PC-9 (cell line): ENCODE measurements at regions of chr4 and their contacts with region 1.

Region 1: GRCh38 chr4:122716825-122717448 is 15.6 kb upstream of the BBS12 start:
- DNase-seq: peak in 1 of 2 experiments; percentile 54
- H3K4me3 ChIP-seq: no peak overlapping the region
- H3K27ac ChIP-seq: no peak overlapping the region
- H3K4me1 ChIP-seq: no peaks in the 10 kb centered on the region
- H3K27me3 ChIP-seq: no peaks in the 10 kb centered on the region
- CTCF ChIP-seq: peak; percentile 90

Region 2: DNA sequence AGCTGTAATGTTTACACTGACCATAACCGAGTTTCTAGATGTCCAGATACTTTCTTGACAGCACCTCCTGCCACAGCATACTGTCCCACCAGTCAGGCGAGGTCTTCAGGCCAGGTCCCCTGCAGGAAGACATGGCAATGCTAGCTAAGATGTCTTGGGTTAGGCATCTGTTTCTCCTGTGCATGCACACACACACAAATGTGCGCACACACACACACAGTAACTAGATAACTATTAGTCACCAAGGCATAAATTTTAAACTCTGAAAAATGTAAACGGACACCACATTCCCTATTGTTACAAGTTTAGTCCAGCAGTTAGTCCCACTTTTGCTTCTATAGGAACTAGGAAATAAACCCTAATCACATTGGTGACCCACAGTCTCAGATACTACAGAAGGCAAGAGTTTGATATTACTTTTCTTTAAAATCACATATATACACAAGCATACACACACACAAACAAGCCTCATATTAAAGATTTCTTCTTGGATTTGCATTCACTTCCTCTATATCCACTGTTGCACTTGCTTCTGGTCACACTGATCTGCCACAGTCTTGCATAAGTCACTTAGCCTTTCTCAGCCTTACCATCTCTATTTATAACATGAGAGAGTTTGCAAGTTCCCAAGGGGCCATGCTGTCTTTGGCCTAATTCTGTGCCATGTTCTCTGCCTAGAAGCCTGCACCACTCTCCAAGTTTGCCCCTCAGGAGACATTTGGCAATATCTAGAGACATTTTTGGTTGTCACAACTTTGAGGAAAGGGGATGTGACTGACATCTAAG is 128.3 kb before region 1 on chr4:
- CTCF ChIA-PET with region 1: no interaction called
- POLR2A ChIA-PET with region 1: no interaction called
- intact Hi-C with region 1: no loop called
- DNase-seq: no peak
- H3K4me3 ChIP-seq: no peak overlapping the region
- H3K27ac ChIP-seq: no peak overlapping the region
- H3K4me1 ChIP-seq: no peaks in the 10 kb centered on the region
- H3K27me3 ChIP-seq: no peaks in the 10 kb centered on the region
- CTCF ChIP-seq: no peak

Region 3: GRCh38 chr4:122602277-122603142 is 114.4 kb before region 1 on chr4:
- CTCF ChIA-PET with region 1: interaction called, 16 read pairs
- POLR2A ChIA-PET with region 1: no interaction called
- intact Hi-C with region 1: loop called (anchors 2 kb)
- DNase-seq: peak in 1 of 2 experiments; percentile 6
- H3K4me3 ChIP-seq: no peak overlapping the region
- H3K27ac ChIP-seq: no peak overlapping the region
- H3K4me1 ChIP-seq: no peaks in the 10 kb centered on the region
- H3K27me3 ChIP-seq: 0 out of 2 replicates have a peak, but pooled peaks cover 6% of the 10 kb centered on the region
- CTCF ChIP-seq: peak; percentile 64

Region 4: DNA sequence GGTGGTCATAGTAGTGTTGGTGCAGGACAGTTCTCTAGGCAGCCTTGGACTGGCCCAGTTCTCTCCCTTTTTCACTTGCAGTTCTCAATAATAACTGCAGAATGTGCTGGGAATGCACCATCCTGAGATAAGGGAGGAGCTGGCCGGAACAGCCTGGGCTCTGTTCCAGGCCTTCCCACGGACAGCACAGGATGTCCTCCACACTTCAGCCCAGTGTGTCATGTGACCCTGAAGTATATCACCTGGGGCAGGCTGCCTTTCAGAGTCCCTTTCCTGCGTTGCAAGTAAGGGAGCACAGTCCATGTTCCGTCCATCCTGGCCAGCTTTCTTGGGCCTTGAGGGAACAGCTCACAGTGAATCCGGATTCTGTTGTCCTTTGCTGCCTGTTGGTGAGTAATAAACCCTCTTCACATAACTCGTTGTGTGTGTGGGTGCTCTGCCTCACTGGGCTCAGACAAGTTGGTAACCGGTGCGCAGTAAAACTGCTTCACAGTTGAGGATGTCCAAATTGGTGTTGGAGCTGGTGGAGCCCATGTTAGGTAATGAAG is 16.7 kb before region 1 on chr4:
- CTCF ChIA-PET with region 1: no interaction called
- POLR2A ChIA-PET with region 1: no interaction called
- intact Hi-C with region 1: no loop called
- DNase-seq: peak in 1 of 2 experiments; percentile 40
- H3K4me3 ChIP-seq: no peak overlapping the region
- H3K27ac ChIP-seq: no peak overlapping the region
- H3K4me1 ChIP-seq: no peaks in the 10 kb centered on the region
- H3K27me3 ChIP-seq: no peaks in the 10 kb centered on the region
- CTCF ChIP-seq: no peak

Region 5: DNA sequence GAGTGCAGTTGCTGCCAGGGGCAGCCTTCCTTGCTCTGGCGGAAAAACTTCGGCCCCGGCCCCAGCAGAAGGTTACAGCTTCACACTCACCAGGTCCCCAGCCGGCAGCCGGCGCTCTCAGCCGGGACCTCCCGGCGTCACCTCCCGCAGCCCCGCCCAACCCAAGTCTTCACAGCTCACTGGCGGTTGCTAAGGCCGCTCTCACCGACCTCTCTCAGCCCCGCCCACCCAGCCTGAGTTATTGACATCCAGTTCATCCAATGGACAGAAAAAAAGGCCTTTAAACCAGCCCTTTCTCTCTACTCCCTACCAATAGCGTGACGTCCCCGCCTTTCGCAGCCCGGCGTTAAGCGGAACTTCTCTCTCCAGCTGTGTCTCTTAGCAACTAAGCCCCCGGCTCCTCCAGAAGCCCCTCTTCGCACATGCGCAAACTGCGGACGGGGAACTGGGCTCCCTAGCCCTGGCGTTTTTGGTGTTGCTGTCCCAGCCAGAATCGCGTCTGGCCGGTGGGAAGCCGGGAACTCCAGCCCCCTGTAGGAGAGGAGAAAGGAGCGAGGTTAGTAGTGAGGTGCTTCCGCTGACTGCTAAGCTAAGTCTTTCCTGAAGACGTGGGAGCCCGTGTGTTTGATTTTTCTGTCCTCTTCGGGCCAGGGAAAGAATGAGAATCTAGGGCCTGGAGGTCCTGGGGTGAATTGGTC is 15.5 kb after region 1 on chr4 and contains the start of gene BBS12:
- CTCF ChIA-PET with region 1: interaction called, 10 read pairs
- POLR2A ChIA-PET with region 1: interaction called, 3 read pairs
- intact Hi-C with region 1: no loop called
- DNase-seq: peak; percentile 99
- H3K4me3 ChIP-seq: peak within 1 kb of the TSS; percentile 62
- H3K27ac ChIP-seq: peak within 1 kb of the TSS; percentile 47
- H3K4me1 ChIP-seq: peaks cover 19% of the 10 kb centered on the region
- H3K27me3 ChIP-seq: no peaks in the 10 kb centered on the region
- CTCF ChIP-seq: no peak; the same call in 1 of the 2 replicates
- total RNA-seq, gene BBS12: 2.9 and 4.9 TPM in 2 replicates